Activated naive CD4-positive, alpha-beta T cell treated with anti-CD3 and anti-CD28 coated beads for 36 hours (primary cell): ENCODE measurements at regions of chr15 and their contacts with region 1.

Region 1: DNA sequence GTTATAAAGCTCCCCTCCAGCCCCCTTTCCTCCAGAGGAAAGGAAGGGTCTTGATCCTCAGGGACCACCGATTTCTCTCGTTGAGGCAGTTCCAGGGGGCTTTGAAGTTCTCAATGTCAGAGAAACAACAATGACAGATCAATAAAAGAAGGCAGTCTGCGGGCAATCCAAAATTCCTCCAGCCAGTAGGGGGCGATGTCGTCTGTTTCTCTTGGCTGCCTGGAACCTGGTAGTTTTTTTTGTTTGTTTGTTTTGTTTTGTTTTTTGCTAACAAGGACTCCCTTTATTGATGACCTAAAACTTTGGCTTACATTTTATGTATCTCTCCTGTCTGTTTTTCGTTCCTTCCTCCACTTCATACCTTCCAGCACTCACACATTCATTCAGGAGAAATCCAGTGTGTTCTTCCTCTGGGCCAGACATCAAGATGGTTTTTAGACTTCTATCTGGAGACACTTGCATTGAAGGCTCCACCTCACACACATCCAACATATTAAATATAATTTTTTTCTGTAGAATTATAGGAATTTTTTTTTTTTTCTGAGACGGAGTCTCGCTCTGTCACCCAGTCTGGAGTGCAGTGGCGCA is 276.6 kb downstream of the RPLP1 start:
- DNase-seq: peak; percentile 88
- H3K4me3 Mint-ChIP-seq: no peak overlapping the region
- H3K27ac Mint-ChIP-seq: no peak overlapping the region
- H3K4me1 Mint-ChIP-seq: peaks cover 21% of the 10 kb centered on the region
- H3K27me3 Mint-ChIP-seq: no peaks in the 10 kb centered on the region

Region 2: GRCh38 chr15:69380100-69380727 is 349.0 kb before region 1 on chr15:
- CTCF ChIA-PET with region 1: no interaction called
- intact Hi-C with region 1: no loop called
- DNase-seq: no peak
- H3K4me3 Mint-ChIP-seq: no peak overlapping the region
- H3K27ac Mint-ChIP-seq: no peak overlapping the region
- H3K4me1 Mint-ChIP-seq: no peaks in the 10 kb centered on the region
- H3K27me3 Mint-ChIP-seq: peaks cover 4% of the 10 kb centered on the region

Region 3: DNA sequence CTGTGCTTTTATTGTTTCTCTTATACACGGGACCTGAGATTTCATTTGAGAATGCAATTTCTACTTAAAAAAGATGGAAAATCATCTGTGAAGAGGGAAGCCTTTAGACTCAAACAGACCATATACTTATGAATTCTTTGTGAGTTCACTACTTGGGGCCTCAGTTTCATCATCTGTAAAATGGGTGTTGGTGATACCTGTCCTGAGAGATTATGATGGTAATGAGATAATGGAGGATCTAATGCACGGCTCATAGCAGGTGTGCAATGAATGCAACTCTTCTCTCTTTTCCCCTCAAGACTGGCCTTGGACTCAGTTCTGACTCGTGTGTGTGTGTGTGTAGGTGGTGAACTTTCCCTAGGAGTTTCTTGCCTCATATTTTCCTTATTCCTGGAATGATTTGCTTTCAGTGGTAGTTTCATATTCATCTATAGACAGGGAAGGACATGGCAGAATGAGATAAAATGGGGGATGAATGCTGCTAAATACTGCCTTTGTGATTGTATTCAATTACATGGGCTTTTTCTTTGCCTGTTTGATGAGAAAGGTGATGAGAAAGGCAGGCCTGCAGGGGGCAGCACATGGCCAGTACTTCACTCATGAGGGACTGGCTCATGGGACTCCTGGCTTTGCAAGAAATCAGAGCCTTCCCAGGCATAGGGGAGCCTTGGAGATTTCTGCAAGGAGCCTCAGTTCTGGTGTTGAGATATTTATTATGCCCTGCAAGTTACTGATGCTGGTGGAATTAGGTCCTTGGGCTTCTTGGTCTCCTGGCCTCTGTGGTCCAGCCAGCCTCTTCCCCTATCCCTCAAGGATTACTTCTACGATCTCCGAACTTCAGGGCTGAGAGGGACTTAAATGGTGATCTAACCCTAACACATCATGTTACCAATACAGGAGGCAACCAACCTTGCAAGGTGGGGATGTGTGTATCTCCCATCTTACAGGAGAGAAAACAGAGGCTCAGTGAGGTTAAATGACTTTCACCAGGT is 205.9 kb before region 1 on chr15:
- CTCF ChIA-PET with region 1: interaction called, 3 read pairs
- intact Hi-C with region 1: loop called (anchors 2 kb)
- DNase-seq: peak; percentile 86
- H3K4me3 Mint-ChIP-seq: no peak overlapping the region
- H3K27ac Mint-ChIP-seq: no peak overlapping the region
- H3K4me1 Mint-ChIP-seq: no peaks in the 10 kb centered on the region
- H3K27me3 Mint-ChIP-seq: peaks cover 2% of the 10 kb centered on the region